ENCODE measurements at regions of chr13 and their contacts with region 1.

Region 1: GRCh38 chr13:73428137-73428536 is 369.3 kb downstream of the KLF5 start:
- DNase-seq: no peak
- H3K4me3 ChIP-seq: no peak overlapping the region
- H3K27ac ChIP-seq: no peak overlapping the region
- H3K4me1 ChIP-seq: no peaks in the 10 kb centered on the region
- H3K27me3 ChIP-seq: no peaks in the 10 kb centered on the region
- CTCF ChIP-seq: no peak
- POLR2A ChIP-seq: no peak

Region 2: DNA sequence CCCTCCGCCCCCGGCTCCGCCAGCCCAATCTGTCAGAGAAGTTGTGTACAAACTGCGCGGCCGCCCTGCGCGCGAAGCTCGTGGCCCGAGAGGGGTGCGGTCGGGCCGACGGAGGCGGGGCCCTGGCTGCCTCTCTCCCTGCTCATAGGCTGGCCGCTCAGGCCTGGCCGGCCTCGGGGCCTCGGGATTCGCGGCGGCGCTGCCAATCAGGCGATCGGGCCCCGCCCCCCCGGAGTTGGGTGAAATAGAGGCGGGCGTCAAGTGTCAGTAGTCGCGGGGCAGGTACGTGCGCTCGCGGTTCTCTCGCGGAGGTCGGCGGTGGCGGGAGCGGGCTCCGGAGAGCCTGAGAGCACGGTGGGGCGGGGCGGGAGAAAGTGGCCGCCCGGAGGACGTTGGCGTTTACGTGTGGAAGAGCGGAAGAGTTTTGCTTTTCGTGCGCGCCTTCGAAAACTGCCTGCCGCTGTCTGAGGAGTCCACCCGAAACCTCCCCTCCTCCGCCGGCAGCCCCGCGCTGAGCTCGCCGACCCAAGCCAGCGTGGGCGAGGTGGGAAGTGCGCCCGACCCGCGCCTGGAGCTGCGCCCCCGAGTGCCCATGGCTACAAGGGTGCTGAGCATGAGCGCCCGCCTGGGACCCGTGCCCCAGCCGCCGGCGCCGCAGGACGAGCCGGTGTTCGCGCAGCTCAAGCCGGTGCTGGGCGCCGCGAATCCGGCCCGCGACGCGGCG is 369.2 kb before region 1 on chr13 and contains the start of gene KLF5:
- intact Hi-C with region 1: loop called (anchors 10 kb)
- DNase-seq: peak; percentile 96 to 97
- H3K4me3 ChIP-seq: peak within 1 kb of the TSS; percentile 70 to 91 (median 80)
- H3K27ac ChIP-seq: peak within 1 kb of the TSS; percentile 79 to 92
- H3K4me1 ChIP-seq: no peaks in the 10 kb centered on the region
- H3K27me3 ChIP-seq: no peaks in the 10 kb centered on the region
- CTCF ChIP-seq: no peak
- POLR2A ChIP-seq: peak; percentile 91
- total RNA-seq, gene KLF5: 2.2 to 30.7 (median 10.5) TPM

Region 3: GRCh38 chr13:73230716-73231115 is 197.4 kb before region 1 on chr13:
- intact Hi-C with region 1: no loop called
- DNase-seq: no peak
- H3K4me3 ChIP-seq: no peak overlapping the region
- H3K27ac ChIP-seq: no peak overlapping the region
- H3K4me1 ChIP-seq: no peaks in the 10 kb centered on the region
- H3K27me3 ChIP-seq: no peaks in the 10 kb centered on the region
- CTCF ChIP-seq: no peak
- POLR2A ChIP-seq: no peak

Region 4: GRCh38 chr13:75181906-75182305 is 1753.8 kb after region 1 on chr13:
- intact Hi-C with region 1: no loop called
- DNase-seq: no peak
- H3K4me3 ChIP-seq: no peak overlapping the region
- H3K27ac ChIP-seq: no peak overlapping the region
- H3K4me1 ChIP-seq: no peaks in the 10 kb centered on the region
- H3K27me3 ChIP-seq: no peaks in the 10 kb centered on the region
- CTCF ChIP-seq: no peak
- POLR2A ChIP-seq: no peak